ENCODE measurements at regions of chr5 and their contacts with region 1.

Region 1: GRCh38 chr5:119397518-119398380 is 41.9 kb downstream of the TNFAIP8 start:
- DNase-seq: no peak
- H3K4me3 Mint-ChIP-seq: peak overlapping the region; percentile 11
- H3K27ac Mint-ChIP-seq: peak overlapping the region; percentile 83
- H3K4me1 Mint-ChIP-seq: peaks cover 61% of the 10 kb centered on the region
- H3K27me3 Mint-ChIP-seq: no peaks in the 10 kb centered on the region

Region 2: DNA sequence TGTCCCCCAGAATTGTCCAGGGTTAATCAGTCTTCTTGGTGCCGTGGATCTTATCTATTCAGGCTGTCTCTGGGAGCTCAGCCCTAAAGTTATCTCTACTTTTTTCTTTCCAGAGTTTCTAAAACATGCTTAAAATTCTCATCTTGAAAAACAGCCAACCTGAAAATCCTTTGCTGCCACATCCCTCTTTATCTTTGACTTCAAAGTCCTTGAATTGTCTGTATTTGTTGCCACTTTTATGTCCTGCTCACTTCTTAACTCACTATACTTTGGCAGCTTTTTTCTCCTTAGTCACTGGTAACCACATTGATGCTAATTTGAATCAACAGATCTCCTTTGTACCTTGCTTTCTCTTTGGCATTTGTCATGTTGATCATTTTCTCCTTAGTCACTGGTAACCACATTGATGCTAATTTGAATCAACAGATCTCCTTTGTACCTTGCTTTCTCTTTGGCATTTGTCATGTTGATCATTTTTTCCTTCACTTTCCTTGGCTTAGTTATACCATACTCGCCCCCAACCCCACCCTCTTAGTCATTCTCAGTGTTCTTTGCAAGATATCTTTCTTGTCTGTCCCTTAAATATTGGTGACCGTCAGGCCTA is 318.3 kb before region 1 on chr5:
- intact Hi-C with region 1: loop called (anchors 1 kb)
- DNase-seq: peak; percentile 77
- H3K4me3 Mint-ChIP-seq: peak overlapping the region; percentile 65
- H3K27ac Mint-ChIP-seq: peak overlapping the region; percentile 86
- H3K4me1 Mint-ChIP-seq: peaks cover 33% of the 10 kb centered on the region
- H3K27me3 Mint-ChIP-seq: no peaks in the 10 kb centered on the region

Region 3: GRCh38 chr5:119287547-119288073 is 110.1 kb before region 1 on chr5:
- intact Hi-C with region 1: loop called (anchors 2 kb)
- DNase-seq: peak; percentile 87
- H3K4me3 Mint-ChIP-seq: peak overlapping the region; percentile 78
- H3K27ac Mint-ChIP-seq: peak overlapping the region; percentile 93
- H3K4me1 Mint-ChIP-seq: peaks cover 89% of the 10 kb centered on the region
- H3K27me3 Mint-ChIP-seq: no peaks in the 10 kb centered on the region

Region 4: GRCh38 chr5:119355685-119356611 is 41.8 kb before region 1 on chr5 and contains the start of gene TNFAIP8:
- intact Hi-C with region 1: loop called (anchors 5 kb)
- DNase-seq: peak; percentile 88
- H3K4me3 Mint-ChIP-seq: peak within 1 kb of the TSS; percentile 100
- H3K27ac Mint-ChIP-seq: peak within 1 kb of the TSS; percentile 97
- H3K4me1 Mint-ChIP-seq: peaks cover 61% of the 10 kb centered on the region
- H3K27me3 Mint-ChIP-seq: no peaks in the 10 kb centered on the region
- total RNA-seq, gene TNFAIP8: 188 and 193 TPM in 2 replicates

Region 5: GRCh38 chr5:119378075-119378700 is 19.6 kb before region 1 on chr5:
- intact Hi-C with region 1: loop called (anchors 2 kb)
- DNase-seq: no peak
- H3K4me3 Mint-ChIP-seq: peak overlapping the region; percentile 44
- H3K27ac Mint-ChIP-seq: peak overlapping the region; percentile 77
- H3K4me1 Mint-ChIP-seq: peaks cover 47% of the 10 kb centered on the region
- H3K27me3 Mint-ChIP-seq: no peaks in the 10 kb centered on the region